Panc1 (cell line): ENCODE measurements at regions of chr15 and their contacts with region 1.

Region 1: DNA sequence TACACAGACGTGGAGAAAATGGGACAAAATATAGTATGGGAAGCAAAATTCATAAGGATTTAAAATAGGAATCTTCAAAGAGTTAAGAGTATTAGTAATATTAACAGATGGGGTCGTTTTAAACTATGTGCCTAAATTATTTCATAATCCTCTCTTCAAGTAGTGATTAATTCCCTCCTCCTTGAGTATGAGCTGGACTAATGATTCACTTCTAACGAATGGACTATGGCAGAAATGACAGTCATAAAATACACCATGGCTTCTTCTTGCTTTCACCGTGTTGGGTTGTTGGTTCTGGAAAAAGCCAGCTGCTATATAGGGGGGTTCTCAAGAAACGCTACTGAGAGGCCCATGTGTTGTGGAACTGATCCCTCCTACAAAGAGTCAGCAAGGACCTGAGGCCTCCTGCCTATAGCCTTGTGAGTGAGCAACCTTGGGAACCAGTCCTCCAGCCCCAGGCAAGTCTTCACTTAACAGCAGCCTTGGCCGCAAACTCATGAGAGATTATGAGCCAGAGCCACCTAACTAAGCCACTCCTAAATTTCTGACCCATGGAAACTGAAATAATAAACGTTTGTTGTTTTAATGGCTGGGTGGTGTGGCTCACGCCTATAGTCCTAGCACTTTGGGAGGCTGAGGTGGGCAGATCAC is 64.8 kb upstream of the ABHD2 start:
- DNase-seq: no peak
- ATAC-seq: no peak
- H3K4me3 ChIP-seq: no peak overlapping the region
- H3K27ac ChIP-seq: no peak overlapping the region
- H3K4me1 ChIP-seq: peaks cover 10% of the 10 kb centered on the region
- H3K27me3 ChIP-seq: no peaks in the 10 kb centered on the region
- CTCF ChIP-seq: no peak

Region 2: GRCh38 chr15:88949734-88950400 is 73.6 kb before region 1 on chr15:
- CTCF ChIA-PET with region 1: no interaction called
- POLR2A ChIA-PET with region 1: interaction called, 10 read pairs
- in situ Hi-C with region 1: no loop called
- intact Hi-C with region 1: no loop called
- DNase-seq: no peak
- ATAC-seq: no peak
- H3K4me3 ChIP-seq: no peak overlapping the region
- H3K27ac ChIP-seq: peak overlapping the region; percentile 37; the same call in 1 of the 2 replicates
- H3K4me1 ChIP-seq: peaks cover 8% of the 10 kb centered on the region; the same call in 1 of the 2 replicates
- H3K27me3 ChIP-seq: no peaks in the 10 kb centered on the region
- CTCF ChIP-seq: no peak